ENCODE measurements at regions of chr9 and their contacts with region 1.

Region 1: DNA sequence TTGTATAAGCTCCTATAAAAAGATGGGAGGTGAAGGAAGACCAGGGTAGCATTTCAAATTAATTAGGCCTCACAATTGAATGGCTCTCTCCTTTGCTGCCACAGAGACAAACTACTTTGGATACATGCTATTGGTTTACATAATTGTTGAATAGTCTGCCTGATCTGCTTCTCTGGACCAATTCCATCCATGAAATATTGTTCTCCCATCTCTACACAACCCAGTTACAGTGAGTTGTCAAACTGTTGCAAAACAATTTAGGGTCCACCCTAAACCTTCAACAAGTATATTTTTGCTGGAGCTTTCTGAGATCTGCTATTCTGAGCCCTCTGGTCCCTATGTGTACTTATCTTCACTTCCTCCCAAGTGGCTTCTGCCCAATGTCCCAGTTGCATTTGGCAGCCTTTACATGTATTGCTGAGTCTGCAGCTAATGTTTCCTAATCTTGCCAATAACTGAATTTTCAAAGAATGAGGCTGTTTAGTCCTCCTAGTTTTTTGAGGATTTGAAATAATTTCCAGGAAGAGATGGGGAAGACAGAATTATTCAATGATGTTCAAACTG is 38.9 kb downstream of the AGTPBP1 start:
- DNase-seq: no peak
- H3K4me3 ChIP-seq: no peak overlapping the region
- CTCF ChIP-seq: no peak

Region 2: DNA sequence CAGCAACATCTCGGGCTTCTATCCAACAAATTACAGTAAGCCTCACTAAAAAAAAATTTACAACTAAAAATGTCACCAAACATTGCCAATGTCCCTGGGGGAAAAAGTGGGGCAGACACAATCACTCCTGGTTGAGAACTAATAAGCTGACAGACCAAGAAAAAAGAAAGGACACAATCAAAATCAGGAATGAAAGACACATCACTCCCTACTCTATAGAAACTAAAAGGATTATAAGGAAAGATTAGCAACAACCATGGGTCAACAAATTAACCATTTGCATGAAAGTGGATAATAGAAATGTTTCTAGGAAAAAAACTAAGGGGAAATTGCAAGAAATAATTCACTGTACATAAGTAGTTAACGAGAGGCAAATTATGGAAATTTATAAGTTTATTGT is 14.4 kb before region 1 on chr9:
- CTCF ChIA-PET with region 1: interaction called, 17 read pairs
- POLR2A ChIA-PET with region 1: no interaction called
- DNase-seq: no peak
- H3K4me3 ChIP-seq: no peak overlapping the region
- CTCF ChIP-seq: no peak

Region 3: GRCh38 chr9:85715587-85715986 is 12.8 kb after region 1 on chr9:
- CTCF ChIA-PET with region 1: interaction called, 10 read pairs
- POLR2A ChIA-PET with region 1: no interaction called
- DNase-seq: no peak
- H3K4me3 ChIP-seq: no peak overlapping the region
- CTCF ChIP-seq: no peak

Region 4: GRCh38 chr9:85727500-85727899 is 24.7 kb after region 1 on chr9:
- CTCF ChIA-PET with region 1: interaction called, 10 read pairs
- POLR2A ChIA-PET with region 1: no interaction called
- DNase-seq: no peak
- H3K4me3 ChIP-seq: no peak overlapping the region
- CTCF ChIP-seq: no peak

Measured in AG04449 (cell line).